H1 (cell line): ENCODE measurements at regions of chr1 and their contacts with region 1.

Region 1: GRCh38 chr1:112395821-112396652 is at the start of gene CTTNBP2NL:
- DNase-seq: peak; percentile 91 to 94
- H3K4me3 ChIP-seq: peak within 1 kb of the TSS; percentile 97 to 99 (median 98)
- H3K27ac ChIP-seq: peak within 1 kb of the TSS; percentile 88
- H3K4me1 ChIP-seq: peaks cover 2 to 20% (median 7%) of the 10 kb centered on the region in 4 experiments; a peak in 5 of 7 replicates
- H3K27me3 ChIP-seq: no peaks in the 10 kb centered on the region
- CTCF ChIP-seq: no peak
- EP300 ChIP-seq: no peak; a peak in 1 of 3 replicates
- POLR2A ChIP-seq: peak; percentile 78 to 87
- RAD21 ChIP-seq: no peak
- total RNA-seq, gene CTTNBP2NL: 34.9 and 35.1 TPM in 2 replicates

Region 2: DNA sequence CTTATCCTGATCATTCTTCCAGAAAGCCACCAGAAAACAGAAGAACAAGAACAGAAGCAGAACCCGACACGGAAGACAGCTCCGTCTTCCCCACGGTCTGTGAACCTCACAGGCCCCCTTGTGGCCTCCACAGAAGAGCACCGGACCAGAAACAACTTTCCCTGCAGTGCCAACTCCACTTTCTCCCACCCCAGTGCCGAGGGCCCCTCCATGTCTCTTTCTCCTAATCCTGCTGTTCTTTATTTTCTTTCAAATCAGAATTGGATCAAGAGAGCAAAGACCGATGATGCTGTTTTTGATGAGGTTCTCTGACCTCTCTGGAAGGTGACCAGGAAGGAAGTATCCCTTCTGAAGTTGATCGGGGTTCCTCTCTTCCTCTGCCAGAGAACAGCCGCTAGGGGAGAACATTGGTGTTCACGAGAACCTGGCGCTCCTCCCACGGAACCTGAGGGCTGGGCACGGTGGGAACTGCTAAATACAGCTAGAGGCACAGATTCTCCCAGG is 59.0 kb before region 1 on chr1:
- CTCF ChIA-PET with region 1: no interaction called
- POLR2A ChIA-PET with region 1: no interaction called
- DNase-seq: no peak
- H3K4me3 ChIP-seq: no peak overlapping the region
- H3K27ac ChIP-seq: no peak overlapping the region
- H3K4me1 ChIP-seq: no peaks in the 10 kb centered on the region
- H3K27me3 ChIP-seq: no peaks in the 10 kb centered on the region
- CTCF ChIP-seq: peak; percentile 73 to 79 (median 74)
- EP300 ChIP-seq: no peak
- POLR2A ChIP-seq: no peak
- RAD21 ChIP-seq: peak; percentile 76 to 85

Region 3: GRCh38 chr1:112457241-112457640 is 61.2 kb after region 1 on chr1:
- CTCF ChIA-PET with region 1: interaction called, 80 read pairs
- POLR2A ChIA-PET with region 1: interaction called, 4 read pairs
- DNase-seq: no peak
- H3K4me3 ChIP-seq: no peak overlapping the region
- H3K27ac ChIP-seq: no peak overlapping the region
- H3K4me1 ChIP-seq: peaks cover 0 to 2% (median 0%) of the 10 kb centered on the region in 4 experiments; a peak in 3 of 7 replicates
- H3K27me3 ChIP-seq: no peaks in the 10 kb centered on the region
- CTCF ChIP-seq: no peak
- EP300 ChIP-seq: no peak
- POLR2A ChIP-seq: no peak
- RAD21 ChIP-seq: no peak

Region 4: DNA sequence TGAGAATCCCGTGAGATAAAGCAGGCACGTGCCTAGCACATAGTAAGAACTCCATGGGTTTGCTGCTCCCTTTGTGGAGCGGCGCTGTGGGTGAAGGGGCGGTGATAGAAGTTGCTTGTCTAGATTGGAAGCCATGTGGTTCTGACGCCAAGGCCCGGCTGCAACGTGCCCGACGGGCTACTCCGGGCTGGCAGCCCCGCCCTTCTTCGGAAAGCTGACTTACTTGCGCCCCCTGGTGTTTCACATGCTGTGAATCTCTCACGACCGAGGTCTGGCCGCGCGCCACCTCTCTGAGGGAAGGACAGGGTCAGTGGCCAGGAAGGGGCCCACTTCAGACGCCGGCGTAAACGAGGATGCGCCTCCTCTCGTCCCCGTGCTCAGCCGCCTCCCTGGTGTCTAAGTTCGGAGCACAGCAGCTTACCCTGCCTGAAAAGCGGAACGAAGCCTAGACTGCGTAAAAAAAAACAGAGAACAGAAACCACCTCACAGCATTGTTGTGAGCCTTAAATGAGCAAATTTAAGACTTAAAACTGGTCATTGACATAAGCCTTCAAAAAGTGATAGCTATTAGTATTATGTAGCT is 70.1 kb after region 1 on chr1:
- CTCF ChIA-PET with region 1: interaction called, 80 read pairs
- POLR2A ChIA-PET with region 1: interaction called, 12 read pairs
- DNase-seq: peak; percentile 83 to 98
- H3K4me3 ChIP-seq: peak overlapping the region in 2 of 4 experiments; percentile 10 to 37; a peak in 3 of 8 replicates
- H3K27ac ChIP-seq: no peak overlapping the region
- H3K4me1 ChIP-seq: peaks cover 1 to 9% (median 5%) of the 10 kb centered on the region in 4 experiments; a peak in 5 of 7 replicates
- H3K27me3 ChIP-seq: peaks cover 0 to 12% (median 3%) of the 10 kb centered on the region in 4 experiments; a peak in 4 of 7 replicates
- CTCF ChIP-seq: peak; percentile 71 to 93 (median 89)
- EP300 ChIP-seq: 0 out of 3 replicates have a peak, but pooled peaks of 1 of the 2 experiments have one; percentile 19
- POLR2A ChIP-seq: peak in 1 of 2 experiments; percentile 60; a peak in 2 of 3 replicates
- RAD21 ChIP-seq: peak; percentile 69 to 78

Region 5: DNA sequence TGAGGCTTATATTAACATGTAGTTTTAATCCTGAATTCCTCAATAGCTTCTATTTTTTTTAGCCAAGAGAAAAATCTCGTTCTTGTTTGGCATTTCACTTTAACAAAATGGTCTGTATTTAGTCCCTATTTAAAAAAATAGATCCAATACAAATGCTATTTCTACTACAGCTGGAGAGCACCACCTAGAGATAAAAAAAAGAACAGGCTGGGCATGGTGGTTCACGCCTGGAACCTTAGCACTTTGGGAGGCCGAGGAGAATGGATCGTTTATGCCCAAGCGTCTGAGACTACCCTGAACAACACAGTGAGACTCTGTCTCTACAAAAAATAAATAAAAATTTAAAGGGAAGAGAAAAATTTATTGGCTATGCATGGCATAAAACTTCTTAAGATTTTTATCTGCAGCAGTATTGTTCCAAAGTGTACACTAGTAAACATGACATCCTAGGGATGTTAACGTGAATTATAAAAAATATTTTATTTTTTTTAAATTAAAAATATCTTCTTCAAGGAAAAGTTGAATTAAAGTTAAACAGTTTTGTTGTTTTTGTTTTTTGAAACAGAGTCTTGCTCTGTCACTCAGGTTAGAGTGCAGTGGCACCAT is 218.5 kb after region 1 on chr1:
- CTCF ChIA-PET with region 1: interaction called, 13 read pairs
- POLR2A ChIA-PET with region 1: no interaction called
- DNase-seq: no peak
- H3K4me3 ChIP-seq: no peak overlapping the region
- H3K27ac ChIP-seq: no peak overlapping the region
- H3K4me1 ChIP-seq: no peaks in the 10 kb centered on the region; a peak in 1 of 7 replicates
- H3K27me3 ChIP-seq: no peaks in the 10 kb centered on the region
- CTCF ChIP-seq: peak; percentile 17 to 41 (median 31); a peak in 3 of 4 replicates
- EP300 ChIP-seq: no peak
- POLR2A ChIP-seq: no peak
- RAD21 ChIP-seq: peak; percentile 63 to 69